ENCODE measurements at regions of chr9 and their contacts with region 1.

Region 1: GRCh38 chr9:99819856-99820684 is 1.6 kb upstream of the NR4A3 start:
- DNase-seq: peak; percentile 96
- ATAC-seq: peak; percentile 75

Region 2: GRCh38 chr9:99353408-99353807 is 466.7 kb before region 1 on chr9:
- intact Hi-C with region 1: loop called (anchors 10 kb)
- DNase-seq: no peak
- ATAC-seq: no peak

Region 3: DNA sequence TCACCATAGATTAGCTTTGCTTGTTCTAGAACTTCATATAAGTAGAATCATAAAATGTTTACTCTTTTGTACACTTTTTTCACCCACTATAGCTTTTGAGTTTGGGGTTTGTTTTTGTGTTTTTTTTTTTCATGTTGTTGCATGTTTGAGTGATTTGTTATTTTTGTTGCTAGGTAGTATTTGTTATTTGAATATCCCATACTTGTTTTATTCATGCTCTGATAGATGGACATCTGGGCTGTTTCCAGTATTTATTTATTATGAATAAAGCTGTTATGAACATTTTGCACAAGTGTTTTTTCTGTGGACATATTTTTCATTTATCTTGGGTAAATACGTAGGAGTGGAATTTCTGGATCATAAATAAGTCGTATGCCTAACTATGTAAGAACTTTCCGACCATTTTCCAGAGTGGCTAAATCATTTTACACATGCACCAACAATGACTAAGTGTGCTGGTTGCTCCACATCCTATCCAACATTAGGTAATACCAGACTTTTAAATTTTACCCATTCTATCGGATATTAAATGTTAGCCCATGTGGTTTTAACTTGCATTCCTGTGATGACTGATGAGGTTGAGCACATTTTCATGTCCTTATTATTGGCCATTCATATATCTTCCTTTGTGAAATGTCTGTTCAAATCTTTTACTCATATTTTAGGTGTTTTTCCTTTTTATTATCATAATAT is 67.5 kb before region 1 on chr9:
- intact Hi-C with region 1: no loop called
- DNase-seq: no peak
- ATAC-seq: no peak

Region 4: DNA sequence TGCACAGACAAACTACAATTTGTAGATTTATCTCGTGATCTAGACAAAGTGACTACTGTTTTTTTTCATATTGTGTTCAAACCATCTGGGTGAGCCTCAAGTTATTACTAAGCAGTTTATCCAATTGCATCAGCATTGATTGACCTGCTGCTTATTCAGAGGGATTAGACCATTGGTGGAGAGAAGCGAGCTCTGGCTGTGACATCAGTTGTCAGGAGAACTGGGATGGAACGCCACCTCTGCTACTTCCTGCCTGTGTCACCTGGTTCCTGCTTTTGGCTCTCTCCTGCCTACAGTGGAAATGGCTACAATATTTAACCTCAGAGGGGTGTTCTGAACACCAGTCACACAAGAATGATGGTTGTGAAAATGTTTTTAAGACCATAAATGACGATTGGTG is 13.7 kb after region 1 on chr9:
- intact Hi-C with region 1: no loop called
- DNase-seq: no peak
- ATAC-seq: no peak

Region 5: GRCh38 chr9:99896119-99896518 is 76.0 kb after region 1 on chr9:
- intact Hi-C with region 1: loop called (anchors 10 kb)
- DNase-seq: no peak
- ATAC-seq: no peak